Activated CD4-positive, alpha-beta memory T cell treated with anti-CD3 and anti-CD28 coated beads, Interleukin-2, amount 10 ng/mL, durations not matched to agents 7 days and 5 days (primary cell): ENCODE measurements at regions of chr2 and their contacts with region 1.

Region 1: GRCh38 chr2:179129574-179130238 is 79.8 kb upstream of the CCDC141 start:
- DNase-seq: no peak
- H3K4me3 Mint-ChIP-seq: no peak overlapping the region
- H3K27ac Mint-ChIP-seq: no peak overlapping the region
- H3K4me1 Mint-ChIP-seq: no peaks in the 10 kb centered on the region
- H3K27me3 Mint-ChIP-seq: no peaks in the 10 kb centered on the region

Region 2: GRCh38 chr2:178796079-178796677 is 333.5 kb before region 1 on chr2:
- CTCF ChIA-PET with region 1: interaction called, 13 read pairs
- POLR2A ChIA-PET with region 1: no interaction called
- DNase-seq: no peak
- H3K4me3 Mint-ChIP-seq: no peak overlapping the region
- H3K27ac Mint-ChIP-seq: no peak overlapping the region
- H3K4me1 Mint-ChIP-seq: no peaks in the 10 kb centered on the region
- H3K27me3 Mint-ChIP-seq: no peaks in the 10 kb centered on the region

Region 3: DNA sequence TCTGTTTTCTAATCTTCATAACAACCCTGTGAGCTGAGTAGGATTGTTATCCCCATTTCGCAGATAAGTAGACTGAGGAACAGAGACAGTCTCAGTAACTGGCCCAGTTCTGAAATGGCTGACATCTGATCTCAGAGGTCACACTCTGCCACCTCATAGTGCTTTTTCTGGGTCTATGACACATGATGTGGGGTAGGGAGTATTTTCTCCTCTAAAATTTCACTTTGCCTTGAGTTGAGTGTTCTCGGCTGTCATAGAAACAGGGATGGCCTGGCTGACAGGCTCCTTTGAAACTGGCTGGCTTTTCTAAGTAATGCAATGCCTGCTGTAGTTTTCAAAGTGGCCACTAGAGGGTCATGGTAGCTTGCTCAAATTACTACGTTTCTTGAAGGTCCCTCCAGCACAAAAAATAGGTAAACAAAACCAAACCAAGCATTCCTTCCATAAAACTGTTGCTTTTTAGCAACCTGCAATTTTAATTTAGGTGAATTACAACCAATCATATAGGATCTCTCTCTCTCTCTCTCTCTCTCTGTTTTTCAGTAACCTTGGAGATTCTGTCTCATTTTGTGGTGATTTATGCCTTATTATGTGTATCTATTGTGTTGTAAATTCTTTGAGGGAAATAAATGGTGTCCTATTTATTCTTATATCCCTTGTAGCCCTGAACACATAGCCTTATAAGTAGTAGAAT is 238.3 kb before region 1 on chr2:
- CTCF ChIA-PET with region 1: interaction called, 14 read pairs
- POLR2A ChIA-PET with region 1: no interaction called
- DNase-seq: peak; percentile 62
- H3K4me3 Mint-ChIP-seq: no peak overlapping the region
- H3K27ac Mint-ChIP-seq: no peak overlapping the region
- H3K4me1 Mint-ChIP-seq: no peaks in the 10 kb centered on the region
- H3K27me3 Mint-ChIP-seq: peaks cover 4% of the 10 kb centered on the region

Region 4: DNA sequence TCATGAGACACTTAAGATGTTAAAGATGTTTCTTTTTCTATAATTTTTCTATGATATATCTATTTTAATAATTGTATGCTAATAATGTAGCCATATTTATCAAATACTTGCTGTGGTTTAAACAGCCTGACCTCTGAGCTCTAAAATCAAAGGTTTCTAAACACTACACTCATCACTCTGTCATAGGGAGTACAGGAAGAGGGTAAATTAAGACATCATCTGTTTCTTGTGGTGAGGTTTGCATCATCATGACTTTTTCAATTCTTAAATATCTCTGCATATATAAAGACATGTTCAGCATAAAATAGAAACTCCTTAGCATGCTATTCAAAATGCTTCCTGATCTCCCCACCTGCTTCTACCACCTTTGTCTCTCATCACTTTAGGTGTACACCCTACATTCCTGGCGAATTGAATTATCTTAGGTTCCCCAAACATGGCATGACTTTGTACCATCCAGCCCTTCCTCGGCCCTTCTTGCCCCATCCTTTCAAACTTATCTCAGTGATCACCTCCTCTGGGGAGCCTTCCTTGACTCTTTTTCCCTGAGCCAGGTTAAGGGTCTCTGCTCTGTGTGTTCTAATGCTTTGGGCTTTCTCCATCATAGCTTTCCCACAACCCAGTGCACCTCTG is 217.2 kb before region 1 on chr2:
- CTCF ChIA-PET with region 1: interaction called, 13 read pairs
- POLR2A ChIA-PET with region 1: no interaction called
- DNase-seq: no peak
- H3K4me3 Mint-ChIP-seq: no peak overlapping the region
- H3K27ac Mint-ChIP-seq: no peak overlapping the region
- H3K4me1 Mint-ChIP-seq: peaks cover 9% of the 10 kb centered on the region
- H3K27me3 Mint-ChIP-seq: peaks cover 5% of the 10 kb centered on the region

Region 5: GRCh38 chr2:179020156-179020750 is 109.5 kb before region 1 on chr2:
- CTCF ChIA-PET with region 1: interaction called, 10 read pairs
- POLR2A ChIA-PET with region 1: no interaction called
- DNase-seq: peak; percentile 42
- H3K4me3 Mint-ChIP-seq: no peak overlapping the region
- H3K27ac Mint-ChIP-seq: no peak overlapping the region
- H3K4me1 Mint-ChIP-seq: no peaks in the 10 kb centered on the region
- H3K27me3 Mint-ChIP-seq: peaks cover 2% of the 10 kb centered on the region